ENCODE measurements at regions of chr4 and their contacts with region 1.

Region 1: DNA sequence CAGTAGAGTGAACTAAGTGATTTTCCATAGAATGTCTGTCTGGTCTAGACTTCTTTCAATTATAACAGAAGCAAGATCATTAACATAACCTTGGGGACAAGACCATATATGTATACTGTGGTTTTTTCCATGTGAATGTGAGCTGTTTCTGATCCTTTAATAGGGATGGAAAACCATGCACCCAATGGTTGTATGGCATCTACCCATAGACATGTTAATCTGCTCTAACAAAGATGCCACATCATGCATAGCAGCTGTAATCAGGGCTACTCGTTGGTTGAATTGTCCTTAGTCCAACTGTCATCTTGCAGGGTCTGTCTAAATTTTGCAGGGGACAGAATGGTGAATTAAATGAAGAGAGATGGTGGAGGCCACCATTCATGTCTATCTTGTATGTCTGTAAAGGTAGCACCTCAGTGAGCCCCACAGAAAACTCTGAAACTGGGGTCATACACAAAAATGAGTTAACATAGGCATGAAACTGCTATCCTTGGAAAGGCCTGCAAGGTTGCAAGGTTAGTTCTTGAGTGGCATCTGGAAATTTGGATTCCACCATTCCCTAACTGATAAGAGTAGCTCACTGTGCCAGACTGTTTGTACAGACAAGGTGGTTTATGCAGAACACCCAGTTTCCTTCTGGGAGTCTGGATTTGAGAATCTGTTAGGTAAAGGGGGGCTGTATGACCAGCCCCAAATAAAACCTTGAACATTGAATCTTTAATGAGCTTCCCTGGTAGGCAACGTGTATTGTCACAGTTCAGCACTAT is 16.5 kb downstream of the THAP6 start:
- DNase-seq: no peak
- H3K4me3 ChIP-seq: no peak overlapping the region
- H3K27ac ChIP-seq: no peak overlapping the region
- H3K4me1 ChIP-seq: no peaks in the 10 kb centered on the region
- H3K27me3 ChIP-seq: no peaks in the 10 kb centered on the region
- CTCF ChIP-seq: no peak
- EP300 ChIP-seq: no peak
- POLR2A ChIP-seq: no peak
- RAD21 ChIP-seq: no peak

Region 2: GRCh38 chr4:75514131-75514948 is 16.4 kb before region 1 on chr4 and contains the starts of genes RCHY1 and THAP6:
- CTCF ChIA-PET with region 1: no interaction called
- POLR2A ChIA-PET with region 1: interaction called, 11 read pairs
- DNase-seq: peak; percentile 86 to 93
- H3K4me3 ChIP-seq: peak within 1 kb of the TSS; percentile 70 to 93 (median 80)
- H3K27ac ChIP-seq: peak within 1 kb of the TSS; percentile 87
- H3K4me1 ChIP-seq: peaks cover 0 to 15% (median 7%) of the 10 kb centered on the region in 4 experiments; a peak in 4 of 7 replicates
- H3K27me3 ChIP-seq: no peaks in the 10 kb centered on the region
- CTCF ChIP-seq: no peak; a peak in 2 of 4 replicates
- EP300 ChIP-seq: no peak
- POLR2A ChIP-seq: peak; percentile 81 to 96
- RAD21 ChIP-seq: no peak
- total RNA-seq, gene RCHY1: 39.8 and 44.0 TPM in 2 replicates
- total RNA-seq, gene THAP6: 8.9 and 9.7 TPM in 2 replicates